GM18951 (cell line): ENCODE measurements at regions of chr7 and their contacts with region 1.

Region 1: GRCh38 chr7:73606801-73607691 is 17.3 kb downstream of the MLXIPL start:
- POLR2A ChIP-seq: no peak

Region 2: DNA sequence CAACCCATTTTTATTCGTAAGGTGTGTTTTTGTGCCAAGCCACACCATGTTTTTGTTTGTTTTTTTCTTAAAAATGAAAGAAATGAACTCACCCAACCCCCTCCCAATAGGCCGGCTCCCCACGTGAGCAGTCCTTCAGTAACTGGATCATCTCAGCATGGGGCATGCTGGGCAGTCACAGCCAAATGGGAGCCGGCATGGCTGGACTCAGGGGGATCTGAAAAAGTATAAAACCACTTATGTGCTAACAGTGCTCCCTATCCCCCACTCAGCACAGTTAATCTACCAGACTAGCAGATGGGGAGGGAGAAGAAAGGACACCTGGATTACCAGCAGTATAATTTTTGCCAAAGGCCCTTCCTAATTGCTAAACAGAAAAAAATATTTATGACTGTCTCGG is 124.3 kb before region 1 on chr7:
- in situ Hi-C with region 1: no loop called
- POLR2A ChIP-seq: no peak

Region 3: GRCh38 chr7:73718905-73719805 is 112.1 kb after region 1 on chr7 and contains the start of gene STX1A:
- in situ Hi-C with region 1: loop called (anchors 10 kb)
- POLR2A ChIP-seq: peak; percentile 73

Region 4: GRCh38 chr7:73851410-73852234 is 244.6 kb after region 1 on chr7:
- in situ Hi-C with region 1: loop called (anchors 25 kb)
- POLR2A ChIP-seq: no peak